ENCODE measurements at regions of chr6 and their contacts with region 1.

Region 1: DNA sequence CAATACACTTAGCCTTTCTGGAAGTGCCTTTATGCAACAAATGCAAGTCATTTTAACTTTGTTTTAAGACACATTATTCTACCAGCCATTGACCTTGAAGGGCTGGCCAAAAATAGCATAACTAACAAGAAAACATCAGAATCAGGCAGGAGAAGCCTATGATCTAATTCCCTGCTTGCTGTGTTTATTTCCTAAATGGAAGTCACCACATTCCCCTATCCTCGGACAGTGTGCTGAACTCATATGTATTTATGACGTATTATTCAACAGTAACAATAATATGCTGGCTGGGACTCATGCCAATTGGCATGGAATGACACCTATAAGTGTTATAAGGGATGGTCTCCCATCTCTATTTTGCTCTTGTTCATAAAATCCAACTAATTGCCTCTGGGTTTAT is 140.7 kb downstream of the MAP3K7 start:
- DNase-seq: no peak
- H3K4me3 ChIP-seq: no peak overlapping the region
- H3K27ac ChIP-seq: no peak overlapping the region
- H3K27me3 ChIP-seq: no peaks in the 10 kb centered on the region
- CTCF ChIP-seq: no peak

Region 2: DNA sequence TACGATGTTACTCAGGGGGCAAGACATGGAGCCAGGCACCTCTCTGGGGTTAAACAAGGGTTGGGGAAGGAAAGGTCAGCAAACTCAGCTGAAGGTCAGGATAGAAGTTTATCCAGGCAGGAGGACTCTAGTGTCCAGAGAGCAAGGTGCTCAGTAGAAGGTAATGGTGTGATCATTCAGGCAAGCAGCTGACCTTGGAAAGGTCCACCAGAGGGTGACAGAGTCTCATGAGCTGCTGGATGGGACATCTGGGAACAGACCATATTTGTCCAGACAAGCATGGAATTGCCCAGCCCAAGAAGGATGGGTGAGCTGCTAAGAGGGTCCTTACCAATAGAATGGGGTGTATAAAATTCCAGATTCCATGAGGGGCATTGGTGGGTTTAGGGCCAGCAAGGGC is 51.2 kb after region 1 on chr6:
- intact Hi-C with region 1: loop called in 1 of 2 experiments (anchors 2 kb)
- DNase-seq: no peak
- H3K4me3 ChIP-seq: no peak overlapping the region
- H3K27ac ChIP-seq: peak overlapping the region in 1 of 59 donors; percentile 37
- H3K27me3 ChIP-seq: no peaks in the 10 kb centered on the region
- CTCF ChIP-seq: peak in 19 of 56 donors; percentile 6 to 57 (median 23)

Region 3: GRCh38 chr6:90631046-90631445 is 184.9 kb after region 1 on chr6:
- intact Hi-C with region 1: no loop called
- DNase-seq: no peak
- H3K4me3 ChIP-seq: no peak overlapping the region
- H3K27ac ChIP-seq: no peak overlapping the region
- H3K27me3 ChIP-seq: peaks cover 0 to 7% (median 0%) of the 10 kb centered on the region in 45 donors
- CTCF ChIP-seq: peak in 2 of 56 donors; percentile 8 to 11

Measured in dorsolateral prefrontal cortex (tissue), 120 donors.